Adrenal gland (tissue), 19 donors: ENCODE measurements at regions of chr1 and their contacts with region 1.

Region 1: GRCh38 chr1:36099681-36100341 is 11.1 kb downstream of the ADPRS start:
- DNase-seq: peak; percentile 79 to 90 (median 84)
- H3K4me3 ChIP-seq: no peak overlapping the region
- H3K27ac ChIP-seq: no peak overlapping the region
- H3K4me1 ChIP-seq: peaks cover 2 to 32% of the 10 kb centered on the region in 2 donors
- H3K27me3 ChIP-seq: no peaks in the 10 kb centered on the region
- CTCF ChIP-seq: peak; percentile 52 to 95 (median 85)
- POLR2A ChIP-seq: no peak

Region 2: GRCh38 chr1:36134505-36135329 is 34.9 kb after region 1 on chr1:
- intact Hi-C with region 1: loop called (anchors 5 kb)
- DNase-seq: peak in 6 of 7 donors; percentile 51 to 78 (median 66)
- H3K4me3 ChIP-seq: no peak overlapping the region
- H3K27ac ChIP-seq: peak overlapping the region in 3 of 5 donors; percentile 56 to 89 (median 85)
- H3K4me1 ChIP-seq: peaks cover 12 to 47% of the 10 kb centered on the region in 2 donors
- H3K27me3 ChIP-seq: no peaks in the 10 kb centered on the region
- CTCF ChIP-seq: peak; percentile 48 to 77 (median 64)
- POLR2A ChIP-seq: no peak

Region 3: DNA sequence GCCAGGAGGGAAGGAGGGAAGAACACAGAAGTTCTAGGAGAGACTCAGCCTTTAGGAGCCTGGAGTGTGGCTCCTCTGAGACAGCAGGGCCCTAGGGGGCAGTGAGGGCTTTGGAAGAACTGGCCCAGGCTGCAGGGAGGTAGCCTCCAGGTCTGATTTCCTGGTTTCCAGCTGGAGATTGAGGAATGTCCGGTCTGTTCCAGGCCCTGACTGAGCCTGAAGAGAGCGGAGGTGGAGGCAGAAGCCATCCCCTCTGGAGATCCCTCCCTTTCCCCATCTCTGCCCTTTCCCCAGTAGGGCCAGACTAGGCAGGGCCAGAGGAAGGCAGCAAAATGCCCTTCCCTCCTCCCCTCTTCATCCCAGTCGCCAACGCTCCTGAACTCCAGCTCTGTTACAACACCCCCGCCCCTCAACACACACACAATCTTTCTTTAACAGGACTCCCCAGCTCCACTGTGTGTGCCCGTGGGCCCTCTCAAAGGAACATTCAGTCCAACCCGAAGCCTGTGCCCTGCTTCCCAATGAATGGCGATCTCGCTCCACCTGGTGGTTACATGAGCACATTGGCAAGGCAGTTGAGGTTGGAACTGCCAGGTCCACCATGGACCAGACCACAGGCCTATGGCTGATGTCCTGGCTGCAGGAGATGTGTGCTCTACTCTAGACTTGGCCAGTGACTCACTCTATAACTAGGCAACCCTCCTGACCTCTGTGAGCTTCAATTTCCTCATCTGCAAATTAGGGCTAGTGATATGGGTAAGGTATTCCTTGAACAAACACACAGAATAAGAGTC is 88.2 kb after region 1 on chr1:
- intact Hi-C with region 1: loop called (anchors 5 to 10 kb)
- DNase-seq: peak; percentile 84 to 96 (median 91)
- H3K4me3 ChIP-seq: no peak overlapping the region
- H3K27ac ChIP-seq: peak overlapping the region in 4 of 5 donors; percentile 33 to 83 (median 73)
- H3K4me1 ChIP-seq: peaks cover 6 to 10% of the 10 kb centered on the region in 2 donors
- H3K27me3 ChIP-seq: no peaks in the 10 kb centered on the region
- CTCF ChIP-seq: peak; percentile 83 to 99 (median 96)
- POLR2A ChIP-seq: peak in 1 of 2 donors; percentile 20

Region 4: GRCh38 chr1:36411674-36412520 is 312.1 kb after region 1 on chr1:
- intact Hi-C with region 1: loop called in 1 of 2 experiments (anchors 10 kb)
- DNase-seq: no peak
- H3K4me3 ChIP-seq: no peak overlapping the region
- H3K27ac ChIP-seq: no peak overlapping the region
- H3K4me1 ChIP-seq: no peaks in the 10 kb centered on the region
- H3K27me3 ChIP-seq: no peaks in the 10 kb centered on the region
- CTCF ChIP-seq: no peak
- POLR2A ChIP-seq: no peak